HepG2 (cell line): ENCODE measurements at regions of chr5 and their contacts with region 1.

Region 1: DNA sequence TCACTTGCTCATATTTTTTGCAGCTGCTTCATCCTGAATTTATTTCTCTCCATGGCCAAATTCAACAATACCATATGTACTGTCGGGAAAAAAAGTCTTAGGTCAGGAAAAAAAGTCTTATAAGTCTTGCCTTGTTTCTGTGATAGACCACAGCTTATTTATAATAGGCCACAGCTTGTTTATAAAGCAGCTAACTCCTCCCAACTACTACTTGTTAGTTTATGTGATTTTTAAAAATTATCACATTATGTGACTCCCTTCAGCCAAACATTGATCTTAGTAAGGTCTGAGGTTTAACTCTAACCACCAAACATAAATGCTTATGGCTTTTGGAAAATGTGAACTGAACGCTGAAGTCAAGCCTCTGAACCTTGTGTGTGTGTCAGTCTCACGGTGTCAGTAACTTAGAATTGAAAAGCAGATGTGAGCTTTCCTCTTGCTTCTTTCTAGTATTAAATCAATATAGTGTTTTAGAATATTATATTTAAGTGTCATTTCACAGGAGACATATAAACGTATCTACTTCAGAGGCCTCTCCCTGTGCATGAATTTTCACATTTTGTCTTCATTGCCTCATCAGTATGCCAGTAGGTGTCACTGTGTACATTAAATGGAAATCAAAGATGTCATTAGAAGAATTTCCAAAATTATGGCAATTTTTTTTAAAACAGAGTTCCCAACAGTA is 51.3 kb downstream of the SNX24 start:
- DNase-seq: peak; percentile 9
- ATAC-seq: no peak
- H3K4me3 ChIP-seq: no peak overlapping the region
- H3K27ac ChIP-seq: no peak overlapping the region
- H3K4me1 ChIP-seq: no peaks in the 10 kb centered on the region
- H3K27me3 ChIP-seq: no peaks in the 10 kb centered on the region
- CTCF ChIP-seq: peak; percentile 54
- EP300 ChIP-seq: no peak
- POLR2A ChIP-seq: no peak
- RAD21 ChIP-seq: no peak; the same call in 1 of the 2 replicates

Region 2: GRCh38 chr5:123119334-123119986 is 222.7 kb after region 1 on chr5:
- CTCF ChIA-PET with region 1: no interaction called
- POLR2A ChIA-PET with region 1: no interaction called
- in situ Hi-C with region 1: no loop called
- intact Hi-C with region 1: loop called (anchors 1 kb)
- DNase-seq: peak; percentile 17
- ATAC-seq: peak; percentile 93
- H3K4me3 ChIP-seq: no peak overlapping the region
- H3K27ac ChIP-seq: no peak overlapping the region
- H3K4me1 ChIP-seq: no peaks in the 10 kb centered on the region
- H3K27me3 ChIP-seq: 0 out of 5 replicates have a peak, but pooled peaks cover 0 to 8% of the 10 kb centered on the region in 2 experiments
- CTCF ChIP-seq: peak; percentile 56
- EP300 ChIP-seq: no peak
- POLR2A ChIP-seq: no peak
- RAD21 ChIP-seq: no peak

Region 3: DNA sequence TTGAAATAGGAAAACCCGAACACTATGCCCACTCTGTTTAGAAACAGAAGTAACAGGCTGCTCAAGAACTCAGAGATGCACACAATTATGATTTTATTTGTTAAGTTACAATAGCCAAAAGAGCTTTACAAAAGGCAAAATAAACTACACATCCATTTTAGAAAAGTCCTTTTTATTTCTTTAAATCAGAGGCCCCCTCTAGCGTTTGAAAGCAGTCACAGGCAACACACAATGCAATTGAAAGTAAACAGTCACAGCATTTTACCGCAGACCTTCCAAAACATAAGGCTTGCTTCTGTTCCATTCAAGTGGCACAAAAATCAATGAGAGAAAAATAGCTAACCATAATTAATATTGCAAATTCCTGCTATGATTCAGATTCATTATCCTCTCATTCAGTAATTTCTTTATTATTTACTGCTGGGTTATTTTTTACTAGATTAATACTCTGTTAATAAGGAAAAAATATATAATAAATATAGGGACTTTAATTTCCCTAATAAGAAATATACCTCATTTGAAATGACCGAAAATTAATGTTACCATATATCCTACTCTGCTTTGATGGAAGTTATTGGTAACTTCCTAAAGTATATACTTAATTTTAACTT is 448.2 kb after region 1 on chr5:
- CTCF ChIA-PET with region 1: no interaction called
- POLR2A ChIA-PET with region 1: no interaction called
- in situ Hi-C with region 1: no loop called
- intact Hi-C with region 1: loop called (anchors 1 kb)
- DNase-seq: peak; percentile 15
- ATAC-seq: peak; percentile 43; the same call in 2 of the 3 replicates
- H3K4me3 ChIP-seq: no peak overlapping the region
- H3K27ac ChIP-seq: no peak overlapping the region
- H3K4me1 ChIP-seq: no peaks in the 10 kb centered on the region
- H3K27me3 ChIP-seq: no peaks in the 10 kb centered on the region
- CTCF ChIP-seq: peak; percentile 57
- EP300 ChIP-seq: no peak
- POLR2A ChIP-seq: no peak
- RAD21 ChIP-seq: no peak